HEK293 (cell line): ENCODE measurements at regions of chr15 and their contacts with region 1.

Region 1: DNA sequence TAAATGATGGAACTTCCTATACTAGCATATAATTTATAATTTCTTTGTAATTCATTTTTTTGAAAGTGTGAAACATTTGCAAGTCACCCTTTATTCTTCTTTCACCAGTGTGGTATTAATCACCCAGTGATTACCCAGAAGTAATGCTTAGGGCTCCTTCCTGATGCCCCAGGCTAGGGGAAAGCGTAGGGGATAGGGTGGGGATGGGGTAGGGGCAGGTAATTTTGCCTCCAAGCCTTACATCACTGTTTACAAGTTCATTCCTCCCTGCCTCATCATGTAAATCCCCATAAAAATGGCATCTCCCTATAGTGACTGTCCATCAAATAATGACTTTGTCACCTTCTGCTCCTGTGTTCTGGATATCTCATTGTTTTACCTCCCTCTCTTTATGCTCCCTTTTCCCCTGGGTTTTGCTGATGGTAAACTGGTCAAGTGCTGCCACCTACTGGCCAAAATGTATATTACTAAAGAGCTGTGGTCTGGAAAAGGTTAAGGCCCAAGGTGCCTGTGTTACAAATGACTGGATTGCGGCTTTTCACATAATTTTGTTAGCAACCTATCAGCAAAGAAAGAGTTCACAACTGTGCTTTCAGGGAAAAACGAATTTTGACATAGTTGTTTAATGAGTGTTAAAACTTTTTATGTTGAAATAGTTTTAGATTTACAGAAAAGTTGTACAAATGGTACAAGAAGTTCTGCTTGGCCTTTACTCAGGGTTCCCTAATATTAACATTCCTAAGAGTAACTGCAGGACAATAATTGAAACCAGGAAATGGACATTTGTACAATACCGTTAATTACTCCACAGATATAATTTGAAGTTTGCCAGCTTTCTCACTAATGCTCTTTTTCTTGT is 54.7 kb downstream of the ONECUT1 start:
- H3K4me3 ChIP-seq: no peak overlapping the region
- H3K27ac ChIP-seq: no peak overlapping the region
- H3K4me1 ChIP-seq: no peaks in the 10 kb centered on the region
- CTCF ChIP-seq: peak; percentile 58; the same call in 1 of the 2 replicates

Region 2: GRCh38 chr15:52256366-52256765 is 479.1 kb before region 1 on chr15:
- CTCF ChIA-PET with region 1: interaction called, 13 read pairs
- POLR2A ChIA-PET with region 1: no interaction called
- H3K4me3 ChIP-seq: no peak overlapping the region
- H3K27ac ChIP-seq: no peak overlapping the region
- H3K4me1 ChIP-seq: 0 out of 2 replicates have a peak, but pooled peaks cover 4% of the 10 kb centered on the region
- CTCF ChIP-seq: peak; percentile 23; the same call in 1 of the 2 replicates

Region 3: GRCh38 chr15:52331490-52332240 is 403.8 kb before region 1 on chr15:
- CTCF ChIA-PET with region 1: interaction called, 20 read pairs
- POLR2A ChIA-PET with region 1: no interaction called
- H3K4me3 ChIP-seq: no peak overlapping the region
- H3K27ac ChIP-seq: no peak overlapping the region
- H3K4me1 ChIP-seq: no peaks in the 10 kb centered on the region
- CTCF ChIP-seq: 0 out of 2 replicates have a peak, but pooled peaks have one; percentile 15

Region 4: GRCh38 chr15:52759969-52760368 is 24.5 kb after region 1 on chr15:
- CTCF ChIA-PET with region 1: no interaction called
- POLR2A ChIA-PET with region 1: no interaction called
- H3K4me3 ChIP-seq: no peak overlapping the region
- H3K27ac ChIP-seq: no peak overlapping the region
- H3K4me1 ChIP-seq: no peaks in the 10 kb centered on the region
- CTCF ChIP-seq: no peak